ENCODE measurements at regions of chr1 and their contacts with region 1.

Region 1: DNA sequence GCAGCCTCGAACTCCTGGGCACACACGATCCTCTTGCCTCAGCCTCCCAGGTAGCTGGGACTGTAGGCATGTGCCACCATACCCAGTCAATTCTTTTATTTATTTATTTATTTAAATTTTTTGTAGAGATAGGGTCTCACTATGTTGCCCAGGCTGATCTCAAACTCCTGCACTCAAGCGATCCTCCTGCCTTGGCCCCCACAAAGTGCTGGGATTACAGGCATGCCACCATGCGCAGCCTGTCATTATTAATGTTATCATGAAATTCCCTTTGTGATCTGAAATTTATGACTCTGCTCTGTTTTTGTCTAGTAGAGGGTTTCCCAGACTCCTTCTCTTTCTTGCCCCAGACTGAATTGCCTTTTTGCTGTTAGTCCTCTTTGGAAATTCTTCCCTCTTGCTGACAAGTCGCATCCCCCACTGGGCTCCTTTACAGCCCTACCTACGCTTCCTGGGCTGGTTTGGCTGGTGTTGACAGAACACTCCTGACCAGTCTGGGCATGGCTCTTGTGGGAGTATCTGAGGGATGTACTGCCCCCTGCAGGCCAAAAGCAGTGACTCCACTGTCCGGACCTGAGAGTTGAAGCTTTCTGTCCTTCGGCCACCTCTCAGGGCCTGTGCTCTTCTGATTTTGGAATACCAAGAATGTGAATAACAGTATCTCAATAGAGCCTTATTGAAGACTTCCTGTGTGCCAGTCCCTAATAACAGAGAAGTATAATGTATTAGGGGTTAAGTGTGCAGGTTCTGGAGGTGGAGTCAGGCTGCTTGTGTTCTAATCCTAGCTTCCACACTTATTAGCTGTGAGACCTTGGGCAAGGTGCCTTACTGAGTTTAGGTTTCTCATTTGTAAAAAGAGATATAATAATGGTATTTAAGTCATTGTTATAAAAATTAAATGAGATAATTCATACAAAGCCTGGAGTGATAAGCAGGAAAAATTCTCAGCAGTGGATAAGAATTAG is 28.2 kb downstream of the TCEANC2 start:
- DNase-seq: peak; percentile 1
- H3K4me3 ChIP-seq: no peak overlapping the region
- H3K27me3 ChIP-seq: no peaks in the 10 kb centered on the region
- CTCF ChIP-seq: peak; percentile 76

Region 2: GRCh38 chr1:53807916-53808315 is 273.7 kb before region 1 on chr1:
- CTCF ChIA-PET with region 1: no interaction called
- POLR2A ChIA-PET with region 1: no interaction called
- DNase-seq: peak; percentile 69
- H3K4me3 ChIP-seq: no peak overlapping the region
- H3K27me3 ChIP-seq: no peaks in the 10 kb centered on the region
- CTCF ChIP-seq: no peak

Region 3: GRCh38 chr1:54047384-54048305 is 33.9 kb before region 1 on chr1:
- CTCF ChIA-PET with region 1: no interaction called
- POLR2A ChIA-PET with region 1: no interaction called
- DNase-seq: no peak
- H3K4me3 ChIP-seq: no peak overlapping the region
- H3K27me3 ChIP-seq: no peaks in the 10 kb centered on the region
- CTCF ChIP-seq: no peak

Region 4: GRCh38 chr1:54070171-54070837 is 11.3 kb before region 1 on chr1:
- CTCF ChIA-PET with region 1: interaction called, 11 read pairs
- POLR2A ChIA-PET with region 1: no interaction called
- DNase-seq: no peak
- H3K4me3 ChIP-seq: no peak overlapping the region
- H3K27me3 ChIP-seq: no peaks in the 10 kb centered on the region
- CTCF ChIP-seq: peak; percentile 77

Region 5: DNA sequence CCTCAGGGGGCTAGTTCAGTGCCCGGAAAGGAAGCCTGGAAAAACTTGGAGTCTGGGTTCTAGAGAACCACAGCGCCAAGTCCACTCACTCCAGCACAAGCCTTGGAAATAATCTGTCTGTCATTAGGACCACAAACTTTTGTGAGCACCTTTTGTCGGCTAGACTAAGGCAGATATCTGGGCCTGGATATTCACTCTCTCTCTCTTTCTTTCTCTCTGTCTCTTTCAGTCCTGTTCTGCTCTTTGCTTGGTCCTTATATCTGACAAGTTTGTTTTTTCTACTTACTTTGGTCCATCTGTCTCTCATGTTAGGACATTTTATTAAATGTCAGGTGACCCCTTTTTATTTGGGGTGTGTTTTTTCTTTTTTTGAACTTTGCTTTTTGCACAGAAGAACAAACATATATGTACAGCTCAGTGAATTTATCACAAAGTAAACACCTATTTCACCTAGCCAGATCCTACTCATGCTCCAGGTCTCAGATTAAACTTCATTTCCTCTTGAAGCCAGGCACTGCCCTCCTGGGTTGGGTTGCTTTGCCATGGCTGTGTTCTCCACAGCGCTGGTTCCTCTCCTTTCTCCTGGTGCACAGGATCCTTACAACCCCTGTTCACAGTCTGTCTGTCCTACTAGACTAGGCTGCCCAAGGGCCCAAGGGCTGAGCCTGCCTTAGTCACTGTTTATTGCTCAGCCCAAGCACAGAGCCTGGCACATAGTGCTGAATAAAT is 12.6 kb after region 1 on chr1:
- CTCF ChIA-PET with region 1: interaction called, 10 read pairs
- POLR2A ChIA-PET with region 1: no interaction called
- DNase-seq: no peak
- H3K4me3 ChIP-seq: no peak overlapping the region
- H3K27me3 ChIP-seq: no peaks in the 10 kb centered on the region
- CTCF ChIP-seq: no peak

Measured in BJ (cell line).